ENCODE measurements at regions of chr6 and their contacts with region 1.

Region 1: DNA sequence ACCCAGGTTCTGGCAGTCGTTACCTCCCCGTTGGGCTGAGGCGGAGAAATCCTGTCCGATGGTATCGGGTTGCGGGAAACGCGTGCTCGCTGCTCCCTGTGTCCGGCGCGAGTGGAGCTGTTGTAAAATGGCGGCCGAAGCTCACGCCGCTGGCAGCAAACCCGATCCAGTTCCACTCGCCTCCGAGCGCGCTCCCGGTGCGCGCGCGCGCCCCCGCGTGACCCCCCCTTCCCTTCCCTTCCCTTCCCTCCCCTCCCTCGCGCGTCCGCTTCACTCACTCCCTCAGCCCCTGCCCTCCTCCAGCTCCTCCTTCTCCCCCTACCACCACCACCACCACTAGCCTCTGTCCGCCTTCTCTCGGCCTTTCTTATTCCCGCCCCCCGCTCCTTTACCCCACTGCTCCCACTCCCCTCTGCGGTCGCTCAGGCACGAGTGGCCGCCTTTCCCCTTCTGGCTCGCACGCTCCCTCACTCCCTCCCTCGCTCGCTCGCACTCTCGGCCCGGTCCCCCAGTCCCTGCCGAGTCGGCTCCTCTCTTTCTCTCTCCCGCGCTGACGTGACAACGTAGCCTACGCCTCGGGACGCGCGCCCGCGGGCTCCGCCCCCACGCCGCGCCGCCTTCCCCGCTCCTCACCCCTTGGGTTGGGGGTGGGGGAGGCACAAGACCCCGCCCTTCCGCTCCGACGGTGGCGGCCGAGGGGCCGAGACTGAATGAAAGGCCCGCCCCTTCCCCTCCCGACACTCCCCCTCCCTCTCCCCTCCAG is at the start of gene SYNCRIP:
- DNase-seq: peak; percentile 96 to 99 (median 99)
- ATAC-seq: peak; percentile 91
- H3K4me3 ChIP-seq: peak within 1 kb of the TSS; percentile 99
- H3K4me3 Mint-ChIP-seq: peak within 1 kb of the TSS; percentile 90 to 99 (median 96)
- H3K27ac ChIP-seq: peak within 1 kb of the TSS; percentile 99
- H3K27ac Mint-ChIP-seq: peak within 1 kb of the TSS; percentile 97 to 100 (median 99)
- H3K4me1 ChIP-seq: peaks cover 29 to 31% of the 10 kb centered on the region in 2 donors
- H3K4me1 Mint-ChIP-seq: peaks cover 40 to 52% (median 49%) of the 10 kb centered on the region in 7 donors
- H3K27me3 ChIP-seq: no peaks in the 10 kb centered on the region
- H3K27me3 Mint-ChIP-seq: peaks cover 0 to under 1% (median 0%) of the 10 kb centered on the region in 5 donors
- total RNA-seq, gene SYNCRIP: 69.8 to 131 (median 82.2) TPM

Region 2: DNA sequence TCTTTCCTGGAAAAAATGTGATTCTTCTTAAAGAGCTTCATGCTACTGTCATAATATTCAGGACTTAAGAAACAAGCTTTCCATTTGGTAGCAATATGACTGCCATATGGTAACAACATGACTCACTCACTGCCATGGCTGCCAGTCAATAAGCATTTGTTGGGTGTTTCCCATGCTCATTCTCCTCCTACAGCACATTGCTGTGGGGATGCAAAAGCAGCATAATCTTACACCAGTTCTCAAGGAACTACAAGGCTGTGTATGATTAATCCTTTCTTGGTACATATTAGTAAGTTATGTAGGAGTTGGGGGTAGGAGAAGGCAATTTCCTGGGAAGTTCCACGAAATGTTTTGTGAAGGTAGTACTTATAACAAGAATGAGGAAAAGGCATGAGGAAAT is 1492.2 kb before region 1 on chr6:
- CTCF ChIA-PET with region 1: no interaction called
- POLR2A ChIA-PET with region 1: no interaction called
- intact Hi-C with region 1: no loop called
- DNase-seq: no peak
- ATAC-seq: no peak
- H3K4me3 ChIP-seq: no peak overlapping the region
- H3K4me3 Mint-ChIP-seq: no peak overlapping the region
- H3K27ac ChIP-seq: no peak overlapping the region
- H3K27ac Mint-ChIP-seq: no peak overlapping the region
- H3K4me1 ChIP-seq: no peaks in the 10 kb centered on the region
- H3K4me1 Mint-ChIP-seq: peaks cover 0 to 2% (median 0%) of the 10 kb centered on the region in 7 donors
- H3K27me3 ChIP-seq: no peaks in the 10 kb centered on the region
- H3K27me3 Mint-ChIP-seq: no peaks in the 10 kb centered on the region

Region 3: GRCh38 chr6:84227434-84228197 is 1415.3 kb before region 1 on chr6 and contains the start of gene CEP162:
- CTCF ChIA-PET with region 1: no interaction called
- POLR2A ChIA-PET with region 1: no interaction called
- intact Hi-C with region 1: loop called (anchors 1 kb)
- DNase-seq: peak; percentile 81 to 92 (median 91)
- ATAC-seq: peak; percentile 93
- H3K4me3 ChIP-seq: peak within 1 kb of the TSS; percentile 90
- H3K4me3 Mint-ChIP-seq: peak within 1 kb of the TSS; percentile 89 to 100 (median 96)
- H3K27ac ChIP-seq: peak within 1 kb of the TSS; percentile 76
- H3K27ac Mint-ChIP-seq: peak within 1 kb of the TSS; percentile 77 to 96 (median 90)
- H3K4me1 ChIP-seq: peaks cover 0 to 8% of the 10 kb centered on the region in 2 donors
- H3K4me1 Mint-ChIP-seq: peaks cover 5 to 40% (median 23%) of the 10 kb centered on the region in 7 donors
- H3K27me3 ChIP-seq: no peaks in the 10 kb centered on the region
- H3K27me3 Mint-ChIP-seq: peaks cover 2 to 17% (median 13%) of the 10 kb centered on the region in 5 donors
- total RNA-seq, gene CEP162: 4.4 to 10.7 (median 9.2) TPM

Region 4: DNA sequence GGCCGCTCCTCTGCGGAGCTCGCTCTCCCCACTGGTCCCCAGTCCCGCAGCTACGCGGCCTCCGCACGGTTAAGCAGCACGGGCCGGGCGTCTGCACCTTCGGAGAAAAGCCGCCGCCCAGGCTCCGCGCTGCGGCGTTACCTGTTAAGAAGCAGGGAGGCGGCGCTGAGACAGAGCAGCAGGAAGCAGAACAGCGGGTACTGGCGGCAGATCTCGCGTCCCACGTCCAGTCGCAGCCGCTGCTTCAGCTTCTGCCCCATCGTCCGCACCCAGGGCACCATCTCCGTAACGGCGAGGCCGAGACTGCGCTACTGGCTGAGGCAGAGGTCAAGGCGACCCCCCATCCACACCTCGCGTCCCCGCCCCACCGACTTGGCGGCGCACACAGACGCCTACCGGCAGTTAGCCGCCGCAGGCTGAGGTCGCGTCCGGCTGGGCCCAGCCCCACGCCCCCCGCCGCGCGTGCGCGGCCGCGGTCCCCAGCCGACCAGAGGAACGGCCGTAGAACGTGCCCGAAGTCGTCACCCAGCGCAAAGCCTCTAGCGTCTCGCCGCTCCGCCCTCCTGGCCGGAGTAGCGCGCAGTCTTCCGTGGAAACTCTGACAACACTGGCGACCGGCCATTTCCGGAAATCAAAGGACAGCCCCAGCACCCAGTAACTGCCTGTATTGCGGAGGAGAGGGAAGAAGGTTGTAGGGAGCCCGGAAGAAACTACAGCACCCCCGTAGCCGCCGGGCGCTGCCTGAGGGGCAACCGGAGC is 49.3 kb before region 1 on chr6 and contains the start of gene SNX14:
- CTCF ChIA-PET with region 1: interaction called, 3 read pairs
- POLR2A ChIA-PET with region 1: interaction called, 97 read pairs
- intact Hi-C with region 1: loop called (anchors 1 kb)
- DNase-seq: peak; percentile 59 to 81 (median 73)
- ATAC-seq: peak; percentile 81
- H3K4me3 ChIP-seq: peak within 1 kb of the TSS; percentile 91
- H3K4me3 Mint-ChIP-seq: peak within 1 kb of the TSS; percentile 88 to 98 (median 96)
- H3K27ac ChIP-seq: peak within 1 kb of the TSS; percentile 86
- H3K27ac Mint-ChIP-seq: peak within 1 kb of the TSS; percentile 81 to 97 (median 93)
- H3K4me1 ChIP-seq: peaks cover 5 to 21% of the 10 kb centered on the region in 2 donors
- H3K4me1 Mint-ChIP-seq: peaks cover 29 to 58% (median 47%) of the 10 kb centered on the region in 7 donors
- H3K27me3 ChIP-seq: no peaks in the 10 kb centered on the region
- H3K27me3 Mint-ChIP-seq: peaks cover 0 to 9% (median 0%) of the 10 kb centered on the region in 5 donors
- total RNA-seq, gene SNX14: 37.3 to 71.8 (median 53.3) TPM

Region 5: DNA sequence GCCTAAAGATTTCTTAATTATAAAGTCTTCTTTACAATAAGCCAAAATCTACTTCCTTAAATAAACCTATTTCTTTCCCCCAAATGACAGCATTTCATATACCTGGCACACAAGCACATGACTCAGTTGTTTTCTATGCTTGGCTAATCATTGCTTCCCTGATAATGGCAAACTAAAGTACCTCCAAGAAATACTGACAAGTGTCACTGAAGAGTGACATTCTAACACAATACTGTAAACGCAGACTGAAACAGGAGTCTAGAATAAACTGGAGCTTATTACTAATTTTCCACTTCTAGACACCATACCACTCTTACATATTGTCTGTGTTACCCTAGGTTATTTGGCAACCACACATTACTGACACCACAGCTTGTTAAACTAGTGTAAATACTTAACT is 14.6 kb before region 1 on chr6:
- CTCF ChIA-PET with region 1: no interaction called
- POLR2A ChIA-PET with region 1: interaction called, 3 read pairs
- intact Hi-C with region 1: loop called (anchors 1 to 2 kb)
- DNase-seq: no peak
- ATAC-seq: no peak
- H3K4me3 ChIP-seq: no peak overlapping the region
- H3K4me3 Mint-ChIP-seq: peak overlapping the region in 3 of 10 donors; percentile 4 to 29 (median 5)
- H3K27ac ChIP-seq: no peak overlapping the region
- H3K27ac Mint-ChIP-seq: peak overlapping the region in 1 of 9 donors; percentile 13
- H3K4me1 ChIP-seq: peaks cover 0 to 11% of the 10 kb centered on the region in 2 donors
- H3K4me1 Mint-ChIP-seq: peaks cover 35 to 81% (median 74%) of the 10 kb centered on the region in 7 donors
- H3K27me3 ChIP-seq: no peaks in the 10 kb centered on the region
- H3K27me3 Mint-ChIP-seq: no peaks in the 10 kb centered on the region

Region 6: DNA sequence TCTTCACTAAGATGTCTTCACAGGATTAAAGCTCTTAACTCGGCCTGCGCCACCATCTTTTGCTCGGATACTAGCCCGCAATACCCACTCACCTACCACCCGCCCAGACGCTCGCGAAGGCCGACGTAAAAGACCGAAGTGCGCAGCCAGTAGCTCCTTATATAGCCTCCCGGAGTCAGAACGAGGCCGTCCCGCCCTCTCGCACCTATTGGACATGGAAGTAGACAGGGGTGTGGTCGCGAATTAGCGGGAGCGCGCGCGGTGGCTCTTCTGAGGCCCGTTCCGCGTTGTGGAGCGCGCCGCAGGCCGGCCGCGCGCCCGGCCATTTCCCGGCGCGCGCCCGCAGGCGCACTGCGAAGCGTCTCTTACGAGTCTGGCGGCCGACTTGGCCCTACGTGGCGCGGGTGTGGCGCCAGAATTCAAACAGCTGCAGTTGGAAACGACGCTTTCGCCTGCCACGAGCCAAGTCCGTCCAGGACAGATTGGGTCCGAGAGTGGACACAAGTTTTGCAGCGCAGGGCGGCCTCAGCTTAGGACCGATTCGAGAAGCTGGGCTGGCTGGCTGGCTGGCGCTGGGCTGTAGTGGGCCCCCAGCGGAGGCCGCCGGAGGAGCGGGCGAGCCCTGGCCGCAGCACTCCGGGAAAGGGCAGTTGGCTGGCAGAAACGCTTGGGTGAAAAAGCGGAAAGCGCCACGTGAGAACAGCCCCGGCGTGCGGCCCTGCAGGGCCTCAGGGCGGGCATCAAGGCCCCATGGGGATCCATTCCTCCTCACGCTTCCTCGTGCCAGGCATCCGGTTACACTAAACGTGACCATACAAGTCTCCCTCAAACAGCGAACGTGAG is 35.9 kb after region 1 on chr6:
- CTCF ChIA-PET with region 1: interaction called, 50 read pairs
- POLR2A ChIA-PET with region 1: interaction called, 593 read pairs
- intact Hi-C with region 1: loop called (anchors 1 kb)
- DNase-seq: peak; percentile 97 to 99 (median 98)
- ATAC-seq: peak; percentile 96
- H3K4me3 ChIP-seq: peak overlapping the region; percentile 98
- H3K4me3 Mint-ChIP-seq: peak overlapping the region; percentile 93 to 100 (median 98)
- H3K27ac ChIP-seq: peak overlapping the region; percentile 93
- H3K27ac Mint-ChIP-seq: peak overlapping the region; percentile 96 to 100 (median 99)
- H3K4me1 ChIP-seq: peaks cover 23 to 26% of the 10 kb centered on the region in 2 donors
- H3K4me1 Mint-ChIP-seq: peaks cover 26 to 51% (median 40%) of the 10 kb centered on the region in 7 donors
- H3K27me3 ChIP-seq: no peaks in the 10 kb centered on the region
- H3K27me3 Mint-ChIP-seq: peaks cover 0 to 4% (median 0%) of the 10 kb centered on the region in 5 donors

Region 7: DNA sequence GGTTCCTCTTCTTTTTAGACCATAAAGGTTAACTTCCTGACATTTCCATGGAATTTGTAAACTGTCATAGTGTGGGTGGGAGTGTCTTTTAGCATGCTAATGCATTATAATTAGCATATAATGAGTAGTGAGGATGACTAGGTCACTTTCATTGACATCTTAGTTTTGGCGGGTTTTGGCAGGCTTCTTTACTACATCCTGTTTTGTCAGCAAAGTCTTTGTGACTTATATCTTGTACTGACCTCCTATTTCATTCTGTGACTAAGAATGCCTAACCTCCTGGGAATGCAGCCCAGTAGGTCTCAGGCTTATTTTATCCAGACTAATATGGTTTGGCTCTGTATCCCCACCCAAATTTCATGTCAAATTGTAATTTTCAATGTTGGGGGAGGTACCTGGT is 149.3 kb after region 1 on chr6:
- CTCF ChIA-PET with region 1: no interaction called
- POLR2A ChIA-PET with region 1: no interaction called
- intact Hi-C with region 1: no loop called
- DNase-seq: no peak
- ATAC-seq: no peak
- H3K4me3 ChIP-seq: no peak overlapping the region
- H3K4me3 Mint-ChIP-seq: no peak overlapping the region
- H3K27ac ChIP-seq: no peak overlapping the region
- H3K27ac Mint-ChIP-seq: no peak overlapping the region
- H3K4me1 ChIP-seq: no peaks in the 10 kb centered on the region
- H3K4me1 Mint-ChIP-seq: no peaks in the 10 kb centered on the region
- H3K27me3 ChIP-seq: peaks cover 0 to 4% of the 10 kb centered on the region in 2 donors
- H3K27me3 Mint-ChIP-seq: peaks cover 0 to 18% (median 17%) of the 10 kb centered on the region in 5 donors

Region 8: GRCh38 chr6:87589693-87590549 is 1947.0 kb after region 1 on chr6 and contains the starts of genes ORC3 and RARS2:
- CTCF ChIA-PET with region 1: no interaction called
- POLR2A ChIA-PET with region 1: no interaction called
- intact Hi-C with region 1: loop called in 1 of 2 experiments (anchors 1 kb)
- DNase-seq: peak; percentile 86 to 97 (median 92)
- ATAC-seq: peak; percentile 100
- H3K4me3 ChIP-seq: peak within 1 kb of the TSS; percentile 89
- H3K4me3 Mint-ChIP-seq: peak within 1 kb of the TSS; percentile 87 to 100 (median 96)
- H3K27ac ChIP-seq: peak within 1 kb of the TSS; percentile 92
- H3K27ac Mint-ChIP-seq: peak within 1 kb of the TSS; percentile 87 to 97 (median 95)
- H3K4me1 ChIP-seq: peaks cover 22 to 32% of the 10 kb centered on the region in 2 donors
- H3K4me1 Mint-ChIP-seq: peaks cover 49 to 81% (median 75%) of the 10 kb centered on the region in 7 donors
- H3K27me3 ChIP-seq: no peaks in the 10 kb centered on the region
- H3K27me3 Mint-ChIP-seq: no peaks in the 10 kb centered on the region
- total RNA-seq, gene ORC3: 17.7 to 29.8 (median 27.6) TPM
- total RNA-seq, gene RARS2: 21.0 to 40.0 (median 24.2) TPM